ENCODE measurements at regions of chr5 and their contacts with region 1.

Region 1: DNA sequence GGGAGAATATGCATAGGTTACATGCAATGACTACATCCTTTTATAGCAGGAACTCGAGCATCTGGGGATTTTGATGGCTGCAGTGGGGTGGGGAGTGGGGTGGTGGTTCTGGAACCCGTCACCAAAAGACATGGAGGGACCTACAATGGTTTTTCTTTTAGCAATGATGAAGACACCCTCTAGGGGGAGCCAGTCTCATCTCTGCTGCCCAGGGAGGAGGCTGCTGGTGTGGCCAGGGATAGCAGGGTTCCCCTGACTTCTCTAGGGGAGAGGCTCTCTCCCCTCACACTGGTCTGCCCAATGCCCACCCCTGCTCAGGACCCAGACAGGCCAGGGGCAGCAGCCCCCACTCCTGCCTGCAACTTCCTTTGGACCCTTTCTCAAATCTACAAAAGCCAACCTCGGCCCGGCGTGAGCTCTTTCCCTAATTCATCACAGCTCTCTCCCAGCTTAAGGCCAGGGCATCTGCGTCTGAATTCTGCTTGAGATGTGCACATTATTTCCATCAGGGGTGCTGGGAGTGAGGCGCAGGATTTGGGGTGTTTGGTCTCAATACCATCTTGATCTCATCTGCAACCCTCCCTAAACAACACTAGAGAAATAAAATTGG is 73.6 kb upstream of the RETREG1 start:
- DNase-seq: peak; percentile 80
- H3K4me3 ChIP-seq: no peak overlapping the region
- H3K27ac ChIP-seq: no peak overlapping the region
- H3K4me1 ChIP-seq: peaks cover 9% of the 10 kb centered on the region
- H3K27me3 ChIP-seq: no peaks in the 10 kb centered on the region
- CTCF ChIP-seq: peak; percentile 82

Region 2: DNA sequence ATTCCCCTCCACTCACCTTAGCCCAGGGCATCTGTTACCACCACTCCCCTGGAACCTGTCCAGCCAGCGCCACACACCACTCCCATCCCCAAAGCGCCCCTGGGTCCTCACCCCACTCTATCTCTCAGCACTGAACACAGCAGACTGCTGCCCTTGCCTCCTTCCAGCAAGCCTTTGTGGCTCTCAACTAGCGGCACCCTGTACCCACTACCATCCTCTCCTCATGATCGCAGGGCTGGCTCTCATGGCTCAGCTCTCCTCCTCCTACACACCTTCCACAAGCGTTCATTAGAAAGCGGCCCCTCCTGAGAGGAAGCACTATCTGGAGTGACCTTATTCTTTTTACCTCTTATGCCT is 513.8 kb after region 1 on chr5:
- CTCF ChIA-PET with region 1: no interaction called
- POLR2A ChIA-PET with region 1: no interaction called
- intact Hi-C with region 1: loop called (anchors 1 kb)
- DNase-seq: no peak
- H3K4me3 ChIP-seq: no peak overlapping the region
- H3K27ac ChIP-seq: peak overlapping the region; percentile 11
- H3K4me1 ChIP-seq: peaks cover 23% of the 10 kb centered on the region
- H3K27me3 ChIP-seq: no peaks in the 10 kb centered on the region
- CTCF ChIP-seq: no peak